ENCODE measurements at regions of chr10 and their contacts with region 1.

Region 1: DNA sequence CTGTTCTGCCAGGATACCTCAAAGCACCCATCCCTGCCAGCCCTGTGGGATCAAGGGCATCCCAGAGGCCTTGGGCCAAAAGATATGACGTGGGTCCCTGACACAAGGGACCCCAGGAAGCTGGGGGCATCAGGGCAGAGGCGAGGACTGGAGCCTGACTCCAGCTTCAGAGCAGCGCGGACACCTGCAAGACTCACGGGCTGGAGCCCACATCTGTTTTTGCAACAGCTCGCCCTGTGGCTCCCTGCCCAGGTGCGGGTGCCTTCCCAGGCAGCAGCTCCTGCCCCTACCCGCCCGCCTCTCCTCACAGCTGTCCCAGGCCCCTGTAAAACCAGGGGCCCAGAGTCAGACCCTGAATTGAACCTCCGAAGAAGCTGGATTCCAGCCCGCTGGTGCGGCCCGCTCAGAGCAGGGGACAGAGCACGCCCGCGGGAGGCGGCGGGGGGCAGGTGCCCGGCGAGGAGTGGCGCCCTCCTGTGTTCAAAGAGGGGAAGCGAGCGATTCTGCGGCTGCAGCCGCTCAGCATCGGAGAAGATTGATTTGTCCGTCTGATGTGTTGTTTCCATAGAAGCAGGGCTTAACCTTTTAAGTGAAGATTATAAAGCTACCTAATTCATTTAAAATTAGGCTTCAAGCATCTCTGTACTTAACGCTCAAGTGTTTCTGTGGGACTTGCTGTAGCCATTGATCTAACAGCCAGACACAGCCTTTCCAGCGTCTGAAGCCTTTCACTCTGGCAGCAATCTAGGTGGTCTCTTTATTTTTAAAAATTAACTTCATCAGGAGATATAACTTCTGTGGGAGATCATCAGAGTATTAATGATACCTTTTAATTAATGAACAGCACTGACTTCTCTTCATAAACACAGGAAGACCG is 88.4 kb downstream of the BEND7 start:
- DNase-seq: peak; percentile 64 to 81 (median 68)
- ATAC-seq: peak; percentile 86
- H3K4me3 ChIP-seq: no peak overlapping the region
- H3K27ac ChIP-seq: no peak overlapping the region
- H3K4me1 ChIP-seq: peaks cover 11% of the 10 kb centered on the region
- H3K27me3 ChIP-seq: peaks cover 0 to 3% of the 10 kb centered on the region in 2 donors
- CTCF ChIP-seq: peak; percentile 80 to 91 (median 88)
- POLR2A ChIP-seq: no peak

Region 2: GRCh38 chr10:13371897-13372470 is 68.4 kb before region 1 on chr10:
- intact Hi-C with region 1: loop called (anchors 5 kb)
- DNase-seq: peak; percentile 73 to 82 (median 79)
- ATAC-seq: peak; percentile 98
- H3K4me3 ChIP-seq: no peak overlapping the region
- H3K27ac ChIP-seq: no peak overlapping the region
- H3K4me1 ChIP-seq: no peaks in the 10 kb centered on the region
- H3K27me3 ChIP-seq: no peaks in the 10 kb centered on the region
- CTCF ChIP-seq: peak; percentile 80 to 96 (median 94)
- POLR2A ChIP-seq: no peak

Region 3: GRCh38 chr10:14200698-14201544 is 760.5 kb after region 1 on chr10:
- intact Hi-C with region 1: no loop called
- DNase-seq: peak; percentile 9 to 80 (median 38)
- ATAC-seq: no peak
- H3K4me3 ChIP-seq: no peak overlapping the region
- H3K27ac ChIP-seq: no peak overlapping the region
- H3K4me1 ChIP-seq: peaks cover 4% of the 10 kb centered on the region
- H3K27me3 ChIP-seq: no peaks in the 10 kb centered on the region
- CTCF ChIP-seq: peak in 3 of 7 experiments; percentile 24 to 64 (median 37)
- POLR2A ChIP-seq: no peak